ENCODE measurements at regions of chr10 and their contacts with region 1.

Region 1: GRCh38 chr10:92432596-92432995 is 141.3 kb downstream of the IDE start:
- DNase-seq: no peak
- H3K4me3 Mint-ChIP-seq: no peak overlapping the region
- H3K27ac Mint-ChIP-seq: no peak overlapping the region
- H3K4me1 Mint-ChIP-seq: no peaks in the 10 kb centered on the region
- H3K27me3 Mint-ChIP-seq: no peaks in the 10 kb centered on the region

Region 2: GRCh38 chr10:92087750-92088395 is 344.7 kb before region 1 on chr10:
- intact Hi-C with region 1: loop called (anchors 1 kb)
- DNase-seq: peak; percentile 42
- H3K4me3 Mint-ChIP-seq: no peak overlapping the region
- H3K27ac Mint-ChIP-seq: no peak overlapping the region
- H3K4me1 Mint-ChIP-seq: peaks cover 5% of the 10 kb centered on the region
- H3K27me3 Mint-ChIP-seq: no peaks in the 10 kb centered on the region

Region 3: GRCh38 chr10:92387289-92387940 is 45.2 kb before region 1 on chr10:
- intact Hi-C with region 1: no loop called
- DNase-seq: peak; percentile 13
- H3K4me3 Mint-ChIP-seq: no peak overlapping the region
- H3K27ac Mint-ChIP-seq: no peak overlapping the region
- H3K4me1 Mint-ChIP-seq: no peaks in the 10 kb centered on the region
- H3K27me3 Mint-ChIP-seq: no peaks in the 10 kb centered on the region

Measured in activated T-helper 2 cell treated with anti-CD3 and anti-CD28 coated beads, Interferon-gamma antibody, Interleukin-2, Interleukin-4, amounts not matched to agents 10 μg/mL and 5 μg/mL and 100 μg/mL, durations not matched to agents 14 hours and 24 hours and 36 hours (primary cell).